ENCODE measurements at regions of chr6 and their contacts with region 1.

Region 1: DNA sequence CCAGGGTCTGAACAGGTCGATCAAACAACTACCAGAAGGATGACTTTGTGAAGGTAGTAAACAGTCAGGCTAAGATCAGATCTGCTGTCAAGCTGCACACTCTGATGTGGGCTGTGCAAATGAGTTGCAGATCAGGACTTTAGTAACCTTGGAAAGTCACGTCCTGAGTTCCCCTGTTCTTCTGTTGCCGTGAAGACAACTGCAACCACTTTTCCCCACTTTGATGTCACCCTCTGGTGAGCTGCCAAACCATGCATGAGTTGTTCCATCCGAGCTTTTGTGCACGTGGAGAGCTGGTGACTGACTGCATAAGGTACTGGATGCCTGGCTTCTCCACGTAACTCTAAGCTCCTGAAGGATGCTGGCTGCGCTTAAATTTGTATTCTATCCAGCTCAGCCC is 111.0 kb downstream of the CD83 start:
- DNase-seq: no peak
- H3K4me3 ChIP-seq: no peak overlapping the region
- H3K27ac ChIP-seq: no peak overlapping the region
- H3K4me1 ChIP-seq: no peaks in the 10 kb centered on the region
- H3K27me3 ChIP-seq: no peaks in the 10 kb centered on the region
- CTCF ChIP-seq: no peak
- POLR2A ChIP-seq: no peak

Region 2: DNA sequence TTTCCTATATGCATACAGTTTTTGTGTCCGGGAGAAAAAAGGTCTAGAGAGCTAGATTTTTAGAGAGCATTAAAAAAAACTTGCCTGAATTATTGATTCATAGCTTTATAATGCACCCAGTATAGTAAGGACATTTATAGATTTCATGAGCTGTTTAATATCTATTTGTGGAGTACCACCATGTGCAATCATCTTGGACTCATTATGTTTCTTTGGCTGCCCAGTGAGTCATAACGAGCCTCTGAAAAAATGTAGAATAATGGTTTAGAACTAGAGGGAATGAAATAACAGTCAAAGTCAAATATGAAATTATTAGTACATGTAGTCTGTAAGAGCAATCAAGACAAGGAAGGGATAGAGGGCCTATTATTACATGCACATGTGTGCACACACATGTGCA is 239.0 kb after region 1 on chr6:
- intact Hi-C with region 1: loop called (anchors 5 kb)
- DNase-seq: no peak
- H3K4me3 ChIP-seq: no peak overlapping the region
- H3K27ac ChIP-seq: no peak overlapping the region
- H3K4me1 ChIP-seq: no peaks in the 10 kb centered on the region
- H3K27me3 ChIP-seq: no peaks in the 10 kb centered on the region
- CTCF ChIP-seq: no peak
- POLR2A ChIP-seq: no peak

Region 3: DNA sequence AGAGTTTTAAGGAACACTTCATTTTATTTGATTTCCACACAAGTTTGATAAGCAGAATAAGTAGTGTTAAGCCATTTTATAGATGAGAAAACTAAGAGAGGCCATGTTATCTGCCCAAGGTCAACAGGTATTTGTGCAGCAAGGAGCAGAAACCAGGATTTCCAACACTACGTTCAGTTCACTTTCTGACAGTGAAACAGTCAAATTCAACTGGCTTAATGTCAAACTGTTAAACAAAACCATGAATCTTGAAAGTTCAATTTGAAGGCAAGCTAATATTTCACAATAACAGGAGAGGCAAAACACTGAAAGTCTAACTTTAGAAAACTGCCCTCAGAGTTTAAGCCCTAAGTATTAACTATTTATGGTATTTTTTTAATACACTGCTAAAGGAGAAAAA is 1401.6 kb after region 1 on chr6:
- intact Hi-C with region 1: loop called (anchors 10 kb)
- DNase-seq: no peak
- H3K4me3 ChIP-seq: no peak overlapping the region
- H3K27ac ChIP-seq: no peak overlapping the region
- H3K4me1 ChIP-seq: no peaks in the 10 kb centered on the region
- H3K27me3 ChIP-seq: no peaks in the 10 kb centered on the region
- CTCF ChIP-seq: no peak
- POLR2A ChIP-seq: no peak